Endothelial cell of umbilical vein (primary cell): ENCODE measurements at regions of chr10 and their contacts with region 1.

Region 1: GRCh38 chr10:103983367-103983911 is 16.5 kb downstream of the SLK start:
- DNase-seq: peak; percentile 57
- H3K4me3 ChIP-seq: peak overlapping the region in 1 of 3 experiments; percentile 27
- H3K27ac ChIP-seq: peak overlapping the region; percentile 83
- H3K4me1 ChIP-seq: peaks cover 65% of the 10 kb centered on the region
- H3K27me3 ChIP-seq: no peaks in the 10 kb centered on the region
- CTCF ChIP-seq: no peak
- POLR2A ChIP-seq: no peak

Region 2: GRCh38 chr10:103845972-103846371 is 137.5 kb before region 1 on chr10:
- CTCF ChIA-PET with region 1: no interaction called
- POLR2A ChIA-PET with region 1: no interaction called
- dilution Hi-C with region 1: no loop called
- intact Hi-C with region 1: no loop called
- DNase-seq: peak; percentile 34
- H3K4me3 ChIP-seq: no peak overlapping the region
- H3K27ac ChIP-seq: peak overlapping the region; percentile 23
- H3K4me1 ChIP-seq: peaks cover 28% of the 10 kb centered on the region
- H3K27me3 ChIP-seq: no peaks in the 10 kb centered on the region
- CTCF ChIP-seq: no peak
- POLR2A ChIP-seq: no peak

Region 3: GRCh38 chr10:103911021-103911459 is 72.4 kb before region 1 on chr10:
- CTCF ChIA-PET with region 1: no interaction called
- POLR2A ChIA-PET with region 1: no interaction called
- dilution Hi-C with region 1: no loop called
- intact Hi-C with region 1: loop called (anchors 1 kb)
- DNase-seq: no peak
- H3K4me3 ChIP-seq: no peak overlapping the region
- H3K27ac ChIP-seq: no peak overlapping the region
- H3K4me1 ChIP-seq: peaks cover 28% of the 10 kb centered on the region
- H3K27me3 ChIP-seq: no peaks in the 10 kb centered on the region
- CTCF ChIP-seq: no peak
- POLR2A ChIP-seq: no peak

Region 4: GRCh38 chr10:104016661-104017060 is 33.2 kb after region 1 on chr10:
- CTCF ChIA-PET with region 1: interaction called, 8 read pairs
- POLR2A ChIA-PET with region 1: interaction called, 3 read pairs
- dilution Hi-C with region 1: no loop called
- intact Hi-C with region 1: loop called (anchors 5 kb)
- DNase-seq: no peak
- H3K4me3 ChIP-seq: no peak overlapping the region
- H3K27ac ChIP-seq: no peak overlapping the region
- H3K4me1 ChIP-seq: peaks cover 13% of the 10 kb centered on the region
- H3K27me3 ChIP-seq: no peaks in the 10 kb centered on the region
- CTCF ChIP-seq: no peak
- POLR2A ChIP-seq: no peak

Region 5: DNA sequence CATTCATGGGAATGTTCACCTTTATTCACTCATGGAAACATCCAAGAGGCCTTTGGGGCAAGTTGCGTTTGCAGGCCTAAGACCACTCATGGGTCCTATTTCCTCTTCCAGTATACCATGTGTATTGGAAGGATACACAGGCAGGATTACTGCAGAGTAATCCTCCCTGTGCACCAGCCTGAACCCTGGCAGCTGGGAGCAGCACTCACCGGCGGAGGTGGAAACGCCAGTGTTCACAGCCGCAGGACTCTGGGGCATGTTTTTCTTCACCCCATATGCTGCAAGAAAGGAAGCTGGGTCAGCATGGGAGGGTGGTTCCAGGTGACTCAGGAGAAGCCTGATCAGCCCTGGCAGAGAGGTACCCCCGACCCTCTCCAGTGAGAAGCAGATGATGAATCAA is 77.8 kb after region 1 on chr10:
- CTCF ChIA-PET with region 1: no interaction called
- POLR2A ChIA-PET with region 1: no interaction called
- dilution Hi-C with region 1: no loop called
- intact Hi-C with region 1: no loop called
- DNase-seq: no peak
- H3K4me3 ChIP-seq: no peak overlapping the region
- H3K27ac ChIP-seq: no peak overlapping the region
- H3K4me1 ChIP-seq: no peaks in the 10 kb centered on the region
- H3K27me3 ChIP-seq: no peaks in the 10 kb centered on the region
- CTCF ChIP-seq: no peak
- POLR2A ChIP-seq: no peak

Region 6: GRCh38 chr10:104080762-104081161 is 97.3 kb after region 1 on chr10:
- CTCF ChIA-PET with region 1: no interaction called
- POLR2A ChIA-PET with region 1: no interaction called
- dilution Hi-C with region 1: no loop called
- intact Hi-C with region 1: loop called (anchors 2 kb)
- DNase-seq: peak; percentile 45
- H3K4me3 ChIP-seq: no peak overlapping the region
- H3K27ac ChIP-seq: no peak overlapping the region
- H3K4me1 ChIP-seq: peaks cover 18% of the 10 kb centered on the region
- H3K27me3 ChIP-seq: no peaks in the 10 kb centered on the region
- CTCF ChIP-seq: peak; percentile 46 to 49
- POLR2A ChIP-seq: no peak

Region 7: DNA sequence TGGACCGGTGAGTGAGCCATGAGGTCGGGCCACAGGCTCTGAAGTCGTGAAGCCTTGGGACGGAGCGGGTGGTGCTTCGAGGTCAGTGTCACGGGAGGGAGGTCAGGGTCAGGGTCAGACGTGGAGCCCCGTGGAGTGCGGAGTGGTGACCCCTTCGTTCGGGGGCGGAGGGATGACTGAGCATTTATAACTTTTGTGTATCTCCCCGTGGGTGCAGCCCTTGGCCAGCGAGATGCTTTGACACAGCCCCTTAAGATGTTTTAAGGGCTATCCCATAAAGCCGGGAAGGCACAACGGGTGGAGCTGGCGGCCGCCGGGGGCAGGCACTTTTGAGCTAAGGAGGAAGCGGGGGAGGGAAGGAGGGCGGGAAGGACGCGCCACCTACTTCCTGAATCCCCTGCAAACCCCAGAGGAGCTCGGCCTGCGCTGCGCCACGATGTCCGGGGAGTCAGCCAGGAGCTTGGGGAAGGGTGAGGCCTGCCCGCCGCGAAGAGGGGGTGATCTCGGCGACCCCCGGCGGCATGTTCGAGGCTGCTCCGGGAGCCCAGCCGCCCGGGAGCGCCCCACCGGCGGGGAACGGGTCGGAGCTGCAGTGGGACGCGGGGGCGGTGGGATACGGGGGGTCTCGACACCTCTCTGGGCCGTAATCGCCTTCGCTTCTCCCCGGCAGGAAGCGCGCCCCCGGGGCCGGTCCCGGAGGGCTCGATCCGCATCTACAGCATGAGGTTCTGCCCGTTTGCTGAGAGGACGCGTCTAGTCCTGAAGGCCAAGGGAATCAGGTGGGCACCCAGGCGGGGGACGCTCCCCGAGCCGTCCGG is 271.3 kb after region 1 on chr10 and contains the start of gene GSTO1:
- CTCF ChIA-PET with region 1: no interaction called
- POLR2A ChIA-PET with region 1: no interaction called
- dilution Hi-C with region 1: no loop called
- intact Hi-C with region 1: loop called (anchors 5 kb)
- DNase-seq: peak; percentile 64
- H3K4me3 ChIP-seq: peak within 1 kb of the TSS; percentile 65 to 99 (median 82)
- H3K27ac ChIP-seq: peak within 1 kb of the TSS; percentile 99
- H3K4me1 ChIP-seq: peaks cover 44% of the 10 kb centered on the region
- H3K27me3 ChIP-seq: peaks cover 2% of the 10 kb centered on the region in 2 experiments
- CTCF ChIP-seq: no peak
- POLR2A ChIP-seq: peak; percentile 83
- total RNA-seq, gene GSTO1: 195 and 211 TPM in 2 replicates